ENCODE measurements at regions of chr12 and their contacts with region 1.

Region 1: GRCh38 chr12:52865090-52865944 is 16.5 kb upstream of the KRT78 start:
- DNase-seq: peak; percentile 91
- ATAC-seq: peak; percentile 86
- H3K4me3 Mint-ChIP-seq: no peak overlapping the region
- H3K27ac Mint-ChIP-seq: peak overlapping the region; percentile 19; the same call in 1 of the 2 replicates
- H3K4me1 Mint-ChIP-seq: peaks cover 6% of the 10 kb centered on the region; the same call in 1 of the 2 replicates
- H3K27me3 Mint-ChIP-seq: no peaks in the 10 kb centered on the region
- CTCF ChIP-seq: peak; percentile 78

Region 2: DNA sequence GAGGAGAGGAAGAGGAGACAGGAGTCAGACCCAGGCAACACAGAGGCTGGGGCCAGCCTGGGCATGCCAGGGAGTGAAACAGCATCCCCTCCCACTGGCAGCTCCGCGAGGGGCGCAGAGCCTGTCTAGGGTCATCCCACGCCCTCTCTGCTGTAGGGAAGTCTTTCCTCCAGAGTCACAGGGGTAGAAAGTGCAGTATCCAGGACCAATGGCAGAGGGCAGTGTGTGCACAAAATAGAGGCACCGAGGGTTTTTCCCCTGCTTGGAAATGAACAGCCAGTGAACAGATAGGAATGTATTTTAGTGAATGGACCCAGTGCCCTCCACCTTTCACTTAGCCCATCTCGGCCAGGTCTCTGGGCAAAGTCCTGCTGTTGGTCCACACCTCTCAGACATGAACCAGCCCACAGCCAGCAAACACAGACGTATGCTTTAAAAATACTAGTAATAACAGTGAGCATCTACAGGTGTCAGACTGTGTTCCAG is 282.3 kb before region 1 on chr12:
- CTCF ChIA-PET with region 1: interaction called, 50 read pairs
- POLR2A ChIA-PET with region 1: interaction called, 3 read pairs
- DNase-seq: peak; percentile 74
- ATAC-seq: peak; percentile 97
- H3K4me3 Mint-ChIP-seq: no peak overlapping the region; the same call in 1 of the 2 replicates
- H3K27ac Mint-ChIP-seq: no peak overlapping the region
- H3K4me1 Mint-ChIP-seq: peaks cover 6% of the 10 kb centered on the region
- H3K27me3 Mint-ChIP-seq: no peaks in the 10 kb centered on the region
- CTCF ChIP-seq: no peak; the same call in none of the 2 replicates

Region 3: GRCh38 chr12:52667511-52667910 is 197.8 kb before region 1 on chr12:
- CTCF ChIA-PET with region 1: interaction called, 22 read pairs
- POLR2A ChIA-PET with region 1: no interaction called
- DNase-seq: peak; percentile 24
- ATAC-seq: peak; percentile 75
- H3K4me3 Mint-ChIP-seq: no peak overlapping the region
- H3K27ac Mint-ChIP-seq: no peak overlapping the region
- H3K4me1 Mint-ChIP-seq: no peaks in the 10 kb centered on the region
- H3K27me3 Mint-ChIP-seq: peaks cover 2% of the 10 kb centered on the region; the same call in 1 of the 2 replicates
- CTCF ChIP-seq: no peak

Region 4: DNA sequence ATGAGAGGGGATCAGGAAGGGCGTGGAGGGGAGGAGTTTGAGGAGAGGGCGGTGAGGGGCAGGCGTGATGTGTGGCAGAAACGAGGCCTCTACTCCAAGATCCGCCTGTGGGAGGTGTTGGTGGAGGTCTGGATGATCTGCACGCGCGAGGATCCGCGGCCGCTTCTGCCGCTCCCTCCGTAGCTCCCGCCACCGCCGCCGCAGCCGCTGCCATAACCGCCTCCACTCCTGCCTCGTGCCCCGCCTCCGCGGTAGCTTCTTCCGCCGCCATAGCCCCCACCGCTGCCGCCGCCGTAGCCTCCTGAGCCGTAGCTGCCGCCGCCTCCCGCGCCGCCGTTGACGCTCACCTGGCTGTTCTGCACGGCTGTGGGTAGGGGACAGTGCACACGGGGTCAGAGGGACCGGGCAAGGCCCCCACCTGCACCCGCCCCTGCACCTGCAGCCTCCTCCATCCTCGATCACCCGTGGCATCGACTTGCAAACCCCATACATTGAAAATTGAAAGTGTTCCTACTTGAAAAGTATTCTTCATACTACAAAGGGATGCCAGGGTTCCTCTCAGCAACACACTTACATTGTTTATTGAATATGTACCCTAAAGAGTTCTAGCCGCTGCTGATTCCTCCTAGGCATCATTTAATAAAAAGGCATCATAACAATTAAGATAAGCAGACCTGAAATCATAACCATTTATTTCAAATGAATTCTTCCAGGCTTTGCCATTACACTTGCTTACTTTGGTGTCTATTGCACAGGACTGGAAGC is 174.1 kb before region 1 on chr12:
- CTCF ChIA-PET with region 1: interaction called, 64 read pairs
- POLR2A ChIA-PET with region 1: no interaction called
- DNase-seq: peak; percentile 63
- ATAC-seq: peak; percentile 65
- H3K4me3 Mint-ChIP-seq: peak overlapping the region; percentile 68
- H3K27ac Mint-ChIP-seq: no peak overlapping the region
- H3K4me1 Mint-ChIP-seq: peaks cover 14% of the 10 kb centered on the region
- H3K27me3 Mint-ChIP-seq: peaks cover 47% of the 10 kb centered on the region
- CTCF ChIP-seq: no peak

Region 5: DNA sequence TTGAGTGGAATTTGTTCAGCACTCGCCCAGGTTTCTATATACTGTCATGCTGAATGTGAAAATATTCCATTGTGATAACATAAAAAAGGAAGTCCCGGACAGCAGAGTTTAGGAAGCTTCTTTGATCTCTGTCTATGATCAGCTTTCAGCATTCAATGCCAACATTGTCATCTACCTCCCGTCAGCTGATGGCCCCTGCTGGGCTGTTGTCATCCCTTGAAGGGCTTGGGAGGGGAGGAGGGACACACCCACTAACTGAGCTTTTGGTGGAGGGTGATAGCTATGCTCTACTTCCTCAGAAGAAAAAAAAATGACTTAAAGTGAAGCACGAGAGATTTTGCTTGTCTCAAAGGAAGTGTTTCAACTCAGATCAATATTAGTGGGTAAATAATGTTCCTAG is 157.3 kb before region 1 on chr12:
- CTCF ChIA-PET with region 1: interaction called, 56 read pairs
- POLR2A ChIA-PET with region 1: no interaction called
- DNase-seq: no peak
- ATAC-seq: no peak
- H3K4me3 Mint-ChIP-seq: no peak overlapping the region
- H3K27ac Mint-ChIP-seq: no peak overlapping the region
- H3K4me1 Mint-ChIP-seq: no peaks in the 10 kb centered on the region; the same call in 1 of the 2 replicates
- H3K27me3 Mint-ChIP-seq: peaks cover 18% of the 10 kb centered on the region
- CTCF ChIP-seq: no peak

Region 6: DNA sequence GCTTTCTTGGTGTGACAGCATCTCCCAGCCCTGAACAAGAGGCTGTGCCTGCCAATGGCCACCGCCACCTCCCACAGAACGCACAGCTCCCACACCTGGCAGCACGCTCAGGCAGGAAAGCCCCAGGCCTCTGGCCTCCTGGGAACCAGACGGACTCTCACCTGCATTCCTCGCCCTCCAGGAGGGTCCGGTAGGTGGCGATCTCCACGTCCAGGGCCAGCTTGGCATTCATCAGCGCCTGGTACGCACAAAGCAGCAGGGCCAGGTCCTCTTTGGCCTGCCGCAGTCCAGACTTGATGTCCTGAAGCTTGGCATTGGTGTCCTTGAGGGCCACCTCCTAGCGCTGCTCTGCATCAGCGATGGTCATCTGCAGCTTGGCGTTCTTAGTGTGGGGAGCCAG is 149.9 kb before region 1 on chr12:
- CTCF ChIA-PET with region 1: interaction called, 56 read pairs
- POLR2A ChIA-PET with region 1: no interaction called
- DNase-seq: peak; percentile 75
- ATAC-seq: peak; percentile 62
- H3K4me3 Mint-ChIP-seq: peak overlapping the region; percentile 47
- H3K27ac Mint-ChIP-seq: no peak overlapping the region
- H3K4me1 Mint-ChIP-seq: 0 out of 2 replicates have a peak, but pooled peaks cover 6% of the 10 kb centered on the region
- H3K27me3 Mint-ChIP-seq: peaks cover 53% of the 10 kb centered on the region
- CTCF ChIP-seq: no peak

Region 7: GRCh38 chr12:52805000-52805399 is 60.3 kb before region 1 on chr12:
- CTCF ChIA-PET with region 1: interaction called, 13 read pairs
- POLR2A ChIA-PET with region 1: no interaction called
- DNase-seq: peak; percentile 45
- ATAC-seq: peak; percentile 93
- H3K4me3 Mint-ChIP-seq: no peak overlapping the region
- H3K27ac Mint-ChIP-seq: peak overlapping the region; percentile 47; the same call in 1 of the 2 replicates
- H3K4me1 Mint-ChIP-seq: peaks cover 42% of the 10 kb centered on the region
- H3K27me3 Mint-ChIP-seq: peaks cover 2% of the 10 kb centered on the region; the same call in 1 of the 2 replicates
- CTCF ChIP-seq: no peak

Measured in WTC11 (cell line).